Activated CD8-positive, alpha-beta T cell treated with anti-CD3 and anti-CD28 coated beads for 36 hours (primary cell): ENCODE measurements at regions of chr6 and their contacts with region 1.

Region 1: DNA sequence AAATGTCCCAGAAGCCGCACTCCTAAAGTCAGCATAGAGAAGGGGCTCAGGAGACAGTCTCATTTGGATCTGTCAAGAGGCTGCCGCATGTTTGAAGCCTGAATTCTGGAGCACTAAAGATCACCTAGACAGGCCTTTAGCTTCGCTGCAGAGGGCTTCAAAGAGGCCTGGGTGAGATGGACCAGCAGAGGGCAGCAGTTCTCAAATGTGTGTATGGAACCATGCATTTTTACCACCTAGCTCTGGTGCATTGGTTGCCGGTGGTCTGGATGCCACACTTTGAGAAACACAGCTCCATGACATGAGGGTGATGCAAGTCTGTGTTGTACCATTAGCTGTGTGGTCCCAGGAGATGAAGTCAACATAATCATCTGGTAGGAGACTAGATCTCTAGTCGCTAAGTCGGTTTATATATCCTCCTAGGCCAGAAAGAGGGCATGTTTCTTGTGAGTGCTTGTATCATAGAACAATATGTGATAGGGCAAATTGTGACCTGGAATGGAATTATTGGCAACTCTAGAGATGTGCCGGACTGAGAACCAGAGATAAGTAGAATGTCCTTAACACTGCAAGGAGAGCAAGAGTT is 64.8 kb downstream of the KIAA0319 start:
- DNase-seq: peak; percentile 91
- ATAC-seq: peak; percentile 92
- H3K4me3 Mint-ChIP-seq: no peak overlapping the region
- H3K27ac Mint-ChIP-seq: no peak overlapping the region
- H3K4me1 Mint-ChIP-seq: peaks cover 3% of the 10 kb centered on the region
- H3K27me3 Mint-ChIP-seq: peaks cover 2% of the 10 kb centered on the region
- CTCF ChIP-seq: peak; percentile 76

Region 2: DNA sequence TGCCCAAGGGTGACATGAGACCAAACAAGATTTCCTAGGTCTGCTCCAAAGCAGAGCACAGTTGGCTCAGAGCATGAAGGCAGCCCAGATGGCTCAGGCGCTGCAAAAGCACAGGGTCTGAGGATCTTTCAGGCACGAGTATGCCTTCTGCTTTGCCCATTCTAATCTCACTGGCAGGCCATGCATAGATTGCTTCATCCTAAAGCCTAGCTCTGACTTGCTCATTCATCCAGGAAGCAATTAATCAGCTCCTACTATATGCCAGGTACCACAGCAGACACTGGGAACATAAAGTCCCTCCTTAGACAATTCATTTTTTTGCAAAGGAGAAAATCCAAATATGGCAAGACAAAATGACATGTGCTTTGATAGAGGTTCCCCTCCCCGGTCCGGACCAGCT is 123.0 kb before region 1 on chr6:
- CTCF ChIA-PET with region 1: no interaction called
- POLR2A ChIA-PET with region 1: no interaction called
- intact Hi-C with region 1: no loop called
- DNase-seq: no peak
- ATAC-seq: no peak
- H3K4me3 Mint-ChIP-seq: no peak overlapping the region
- H3K27ac Mint-ChIP-seq: no peak overlapping the region
- H3K4me1 Mint-ChIP-seq: no peaks in the 10 kb centered on the region
- H3K27me3 Mint-ChIP-seq: no peaks in the 10 kb centered on the region
- CTCF ChIP-seq: no peak

Region 3: GRCh38 chr6:24547243-24547642 is 33.9 kb before region 1 on chr6:
- CTCF ChIA-PET with region 1: interaction called, 19 read pairs
- POLR2A ChIA-PET with region 1: no interaction called
- intact Hi-C with region 1: no loop called
- DNase-seq: peak; percentile 81
- ATAC-seq: peak; percentile 96
- H3K4me3 Mint-ChIP-seq: no peak overlapping the region
- H3K27ac Mint-ChIP-seq: no peak overlapping the region
- H3K4me1 Mint-ChIP-seq: peaks cover 9% of the 10 kb centered on the region
- H3K27me3 Mint-ChIP-seq: peaks cover 9% of the 10 kb centered on the region
- CTCF ChIP-seq: no peak

Region 4: DNA sequence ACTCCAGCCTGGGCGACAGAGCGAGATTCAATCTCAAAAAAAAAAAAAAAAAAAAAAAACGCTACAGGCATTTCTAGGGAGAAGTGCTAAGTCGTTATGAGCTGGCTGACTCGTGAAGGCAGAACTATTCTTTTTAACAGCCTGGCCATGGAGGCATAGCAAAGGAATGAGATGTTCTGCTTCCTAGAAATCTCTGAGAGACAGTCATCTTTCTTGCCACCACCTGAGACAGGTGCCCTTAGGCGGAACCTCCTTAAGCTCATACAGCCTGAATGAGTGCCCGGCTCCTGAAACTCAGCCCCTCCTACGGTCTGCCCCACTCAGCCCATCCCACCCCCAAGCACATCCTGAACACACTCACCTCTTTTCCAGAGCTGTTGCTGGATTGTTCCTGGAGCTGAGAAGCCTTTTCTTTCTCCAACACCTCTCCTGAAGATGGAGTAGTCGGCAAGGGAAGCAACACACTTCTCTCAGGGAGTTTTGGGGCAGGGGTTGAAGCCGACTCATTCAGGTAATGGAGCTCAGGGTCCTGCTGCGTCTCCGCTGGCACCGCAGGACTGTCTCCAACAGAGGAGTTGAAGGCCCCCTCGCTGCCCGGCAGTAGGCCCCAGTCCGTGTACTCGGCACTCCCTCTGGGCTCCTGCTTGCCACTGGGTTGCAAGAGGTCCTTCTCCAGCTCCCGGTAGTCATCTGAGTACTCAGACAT is 14.5 kb after region 1 on chr6:
- CTCF ChIA-PET with region 1: interaction called, 26 read pairs
- POLR2A ChIA-PET with region 1: no interaction called
- intact Hi-C with region 1: no loop called
- DNase-seq: no peak
- ATAC-seq: no peak
- H3K4me3 Mint-ChIP-seq: no peak overlapping the region
- H3K27ac Mint-ChIP-seq: no peak overlapping the region
- H3K4me1 Mint-ChIP-seq: no peaks in the 10 kb centered on the region
- H3K27me3 Mint-ChIP-seq: no peaks in the 10 kb centered on the region
- CTCF ChIP-seq: no peak

Region 5: DNA sequence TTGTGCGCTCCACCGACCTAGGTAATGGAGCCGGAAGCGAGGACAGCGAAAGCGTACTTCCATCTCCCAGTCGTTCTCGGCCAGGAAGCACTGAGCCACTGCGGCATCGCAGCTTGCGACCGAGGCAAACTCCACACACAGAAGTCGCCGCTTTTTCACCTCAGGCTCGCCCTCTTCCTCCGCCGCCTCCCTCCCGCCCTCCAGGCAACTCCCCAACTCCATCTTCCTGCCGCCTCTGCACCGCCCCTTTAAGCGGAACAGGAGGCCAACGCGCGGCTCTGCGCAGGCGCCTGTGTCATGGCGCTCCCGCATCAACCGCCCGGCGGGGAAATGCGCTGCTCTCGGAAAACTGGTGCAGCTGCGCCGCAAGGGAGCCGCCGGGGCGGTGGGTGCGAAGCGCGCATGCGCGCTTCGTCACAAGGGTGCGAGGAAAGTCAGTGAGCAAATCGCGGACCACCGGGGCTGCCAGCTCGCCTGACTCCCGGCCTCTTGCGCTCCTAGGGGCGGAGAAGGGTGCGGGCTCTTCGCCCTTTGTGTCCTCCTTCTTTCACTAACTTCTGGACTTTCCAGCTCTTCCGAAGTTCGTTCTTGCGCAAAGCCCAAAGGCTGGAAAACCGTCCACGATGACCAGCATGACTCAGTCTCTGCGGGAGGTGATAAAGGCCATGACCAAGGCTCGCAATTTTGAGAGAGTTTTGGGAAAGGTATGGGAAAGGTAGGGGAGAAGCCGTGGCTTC is 85.6 kb after region 1 on chr6 and contains the starts of genes ACOT13 and TDP2:
- CTCF ChIA-PET with region 1: interaction called, 11 read pairs
- POLR2A ChIA-PET with region 1: no interaction called
- intact Hi-C with region 1: no loop called
- DNase-seq: peak; percentile 96
- ATAC-seq: peak; percentile 95
- H3K4me3 Mint-ChIP-seq: peak within 1 kb of the TSS; percentile 91
- H3K27ac Mint-ChIP-seq: peak within 1 kb of the TSS; percentile 99
- H3K4me1 Mint-ChIP-seq: peaks cover 33% of the 10 kb centered on the region
- H3K27me3 Mint-ChIP-seq: no peaks in the 10 kb centered on the region
- CTCF ChIP-seq: peak; percentile 70
- total RNA-seq, gene ACOT13: 28.9 to 33.6 TPM
- total RNA-seq, gene TDP2: 37.4 to 39.8 TPM

Region 6: GRCh38 chr6:24699521-24700359 is 118.6 kb after region 1 on chr6:
- CTCF ChIA-PET with region 1: interaction called, 141 read pairs
- POLR2A ChIA-PET with region 1: interaction called, 4 read pairs
- intact Hi-C with region 1: loop called (anchors 1 kb)
- DNase-seq: no peak
- ATAC-seq: peak; percentile 40
- H3K4me3 Mint-ChIP-seq: no peak overlapping the region
- H3K27ac Mint-ChIP-seq: peak overlapping the region; percentile 74
- H3K4me1 Mint-ChIP-seq: peaks cover 55% of the 10 kb centered on the region
- H3K27me3 Mint-ChIP-seq: no peaks in the 10 kb centered on the region
- CTCF ChIP-seq: no peak

Region 7: DNA sequence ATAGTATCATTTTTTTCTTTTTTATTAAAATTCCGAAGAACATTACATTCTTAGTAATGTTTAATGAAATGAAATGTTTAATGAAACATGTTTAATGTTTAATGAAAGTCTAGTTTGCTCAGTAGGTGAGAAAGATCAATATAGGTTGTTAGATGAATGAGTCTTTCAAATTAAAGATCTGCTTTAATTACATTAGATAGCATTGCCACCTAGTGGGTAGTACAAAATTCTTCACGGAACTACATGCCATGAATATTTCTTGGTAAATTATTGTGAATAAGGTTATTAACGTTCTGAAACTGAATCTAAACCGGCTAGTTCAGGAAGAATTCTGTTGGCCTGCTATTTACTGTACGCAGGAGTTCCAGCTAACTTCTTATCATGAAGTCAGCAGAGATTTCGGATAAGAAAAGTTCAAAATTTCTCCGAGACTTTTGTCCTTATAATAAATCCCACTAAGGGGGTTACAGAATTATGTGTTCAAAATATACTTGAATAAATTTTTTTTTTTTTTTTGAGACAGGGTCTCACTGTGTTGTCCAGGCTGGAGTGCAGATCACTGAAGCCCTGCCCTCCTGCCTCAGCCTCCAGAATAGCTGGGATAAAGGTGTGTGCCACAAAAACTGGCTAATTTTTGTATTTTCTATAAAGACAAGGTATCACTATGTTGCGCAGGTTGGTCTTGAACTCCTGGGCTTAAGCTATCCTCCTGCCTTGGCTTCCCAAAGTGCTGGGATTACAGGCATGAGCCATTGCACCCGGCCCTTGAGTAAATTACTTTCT is 185.7 kb after region 1 on chr6:
- CTCF ChIA-PET with region 1: interaction called, 72 read pairs
- POLR2A ChIA-PET with region 1: no interaction called
- intact Hi-C with region 1: loop called (anchors 1 kb)
- DNase-seq: no peak
- ATAC-seq: peak; percentile 76
- H3K4me3 Mint-ChIP-seq: no peak overlapping the region
- H3K27ac Mint-ChIP-seq: no peak overlapping the region
- H3K4me1 Mint-ChIP-seq: peaks cover 4% of the 10 kb centered on the region
- H3K27me3 Mint-ChIP-seq: no peaks in the 10 kb centered on the region
- CTCF ChIP-seq: peak; percentile 58

Region 8: DNA sequence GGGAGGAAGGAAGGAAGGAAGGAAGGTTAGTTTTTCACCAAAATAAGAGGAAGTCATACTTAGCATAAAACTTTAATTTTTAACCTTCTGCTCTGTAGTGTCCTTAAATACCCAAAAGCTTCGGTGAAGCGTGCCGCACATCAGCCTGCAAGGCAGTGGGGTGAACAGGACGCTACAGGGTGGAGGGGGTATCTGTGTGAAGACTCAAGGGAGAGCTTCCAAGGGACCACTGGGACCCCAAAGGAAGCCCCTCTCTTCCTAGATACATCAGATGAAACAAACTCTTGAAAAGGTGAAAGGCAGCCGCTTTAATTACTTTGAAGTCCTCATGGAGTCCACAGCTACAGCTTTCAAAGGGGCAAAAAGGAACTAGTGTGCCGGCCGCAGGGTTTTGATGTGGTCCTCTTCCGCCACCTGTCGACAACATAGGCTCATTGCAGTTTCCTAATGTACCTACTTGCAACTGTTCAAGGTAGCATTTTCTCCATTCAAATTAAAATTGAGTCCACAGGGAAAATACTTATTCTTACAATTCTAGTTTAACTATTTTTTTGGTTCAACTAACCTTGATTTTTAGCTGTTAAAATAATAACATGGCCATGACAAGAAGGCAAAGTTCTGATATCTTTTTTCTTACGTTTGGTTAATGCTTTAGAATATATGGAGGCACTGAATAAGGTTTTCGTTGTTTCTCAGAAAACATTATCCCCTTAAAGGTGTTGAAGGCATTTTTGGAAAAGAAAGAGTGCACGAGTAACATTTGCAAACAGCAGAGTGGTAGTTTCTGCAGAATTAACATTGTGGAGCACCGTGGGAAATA is 489.6 kb after region 1 on chr6:
- CTCF ChIA-PET with region 1: interaction called, 10 read pairs
- POLR2A ChIA-PET with region 1: no interaction called
- intact Hi-C with region 1: no loop called
- DNase-seq: peak; percentile 92
- ATAC-seq: peak; percentile 99
- H3K4me3 Mint-ChIP-seq: peak overlapping the region; percentile 68
- H3K27ac Mint-ChIP-seq: peak overlapping the region; percentile 94
- H3K4me1 Mint-ChIP-seq: peaks cover 6% of the 10 kb centered on the region
- H3K27me3 Mint-ChIP-seq: no peaks in the 10 kb centered on the region
- CTCF ChIP-seq: peak; percentile 87